Activated CD8-positive, alpha-beta memory T cell treated with anti-CD3 and anti-CD28 coated beads, Interleukin-2, amount 10 ng/mL, durations not matched to agents 7 days and 5 days (primary cell): ENCODE measurements at regions of chr16 and their contacts with region 1.

Region 1: DNA sequence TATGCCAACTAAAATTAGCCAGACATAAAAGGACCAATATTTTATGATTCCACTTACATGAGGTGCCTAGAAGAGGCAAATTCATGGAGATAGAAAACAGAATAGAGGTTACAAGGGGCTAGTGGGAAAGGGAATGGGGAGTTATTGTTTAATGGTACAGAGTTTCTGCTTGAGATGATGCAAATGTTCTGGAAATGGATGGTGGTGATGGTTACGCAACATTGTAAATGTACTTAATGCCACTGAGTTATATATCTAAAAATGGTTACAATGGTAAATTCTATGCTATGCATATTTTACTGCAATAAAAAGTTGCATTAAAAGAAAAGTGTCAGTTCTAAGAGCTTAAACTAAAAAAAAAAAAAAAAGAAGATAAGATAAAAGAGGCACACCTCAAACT is 17.9 kb downstream of the MT1X start:
- DNase-seq: no peak
- ATAC-seq: no peak
- H3K4me3 Mint-ChIP-seq: no peak overlapping the region
- H3K27ac Mint-ChIP-seq: no peak overlapping the region
- H3K4me1 Mint-ChIP-seq: peaks cover 11% of the 10 kb centered on the region
- H3K27me3 Mint-ChIP-seq: no peaks in the 10 kb centered on the region

Region 2: DNA sequence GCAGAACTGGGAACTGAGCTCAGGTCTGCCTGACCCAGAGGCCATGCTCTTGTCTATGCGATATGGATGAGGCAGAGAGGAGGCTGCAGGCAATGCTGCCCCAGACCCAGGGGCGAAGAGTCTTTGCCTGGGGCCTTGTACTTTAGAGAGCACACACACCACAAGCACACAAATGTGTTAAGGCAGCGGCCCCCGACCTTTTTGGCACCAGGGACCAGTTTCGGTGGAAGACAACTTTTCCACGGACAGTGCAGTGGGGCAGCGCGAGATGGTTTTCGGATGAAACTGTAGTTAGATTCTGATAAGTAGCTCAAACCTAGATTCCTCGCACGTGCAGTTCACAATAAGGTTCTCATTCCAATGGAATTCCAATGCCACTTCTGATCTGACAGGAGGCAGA is 128.7 kb before region 1 on chr16:
- CTCF ChIA-PET with region 1: interaction called, 94 read pairs
- DNase-seq: no peak
- ATAC-seq: no peak
- H3K4me3 Mint-ChIP-seq: no peak overlapping the region
- H3K27ac Mint-ChIP-seq: no peak overlapping the region
- H3K4me1 Mint-ChIP-seq: peaks cover 7% of the 10 kb centered on the region
- H3K27me3 Mint-ChIP-seq: peaks cover 7% of the 10 kb centered on the region

Region 3: DNA sequence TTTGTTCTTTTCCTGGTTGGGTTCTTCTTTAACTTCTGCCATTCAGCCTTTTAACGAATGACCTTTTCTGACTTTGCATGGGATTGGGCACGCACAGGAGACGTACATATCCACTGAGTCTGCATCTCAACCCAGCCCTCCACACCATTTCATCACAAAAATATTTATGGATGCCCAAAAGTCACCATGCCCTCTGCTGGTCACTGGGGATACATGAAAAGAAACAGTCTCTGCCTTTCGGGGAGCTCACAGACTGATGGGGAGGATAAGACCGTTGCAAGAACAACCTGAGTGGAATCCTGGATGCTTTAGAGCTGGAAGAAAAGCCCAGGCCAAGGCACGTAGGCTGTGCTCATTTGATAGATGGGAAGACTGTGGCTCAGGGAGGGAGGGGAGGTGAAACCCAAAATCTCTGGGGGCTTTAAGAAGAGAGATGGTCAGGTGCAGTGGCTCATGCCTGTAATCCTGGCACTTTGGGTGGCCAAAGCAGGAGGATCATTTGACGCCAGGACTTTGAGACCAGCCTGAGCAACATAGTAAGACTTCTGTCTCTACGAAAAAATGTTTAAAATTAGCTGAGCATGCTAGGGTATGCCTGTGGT is 99.7 kb before region 1 on chr16:
- CTCF ChIA-PET with region 1: interaction called, 21 read pairs
- DNase-seq: peak; percentile 62
- ATAC-seq: peak; percentile 61
- H3K4me3 Mint-ChIP-seq: no peak overlapping the region
- H3K27ac Mint-ChIP-seq: no peak overlapping the region
- H3K4me1 Mint-ChIP-seq: peaks cover 9% of the 10 kb centered on the region
- H3K27me3 Mint-ChIP-seq: peaks cover 42% of the 10 kb centered on the region

Region 4: DNA sequence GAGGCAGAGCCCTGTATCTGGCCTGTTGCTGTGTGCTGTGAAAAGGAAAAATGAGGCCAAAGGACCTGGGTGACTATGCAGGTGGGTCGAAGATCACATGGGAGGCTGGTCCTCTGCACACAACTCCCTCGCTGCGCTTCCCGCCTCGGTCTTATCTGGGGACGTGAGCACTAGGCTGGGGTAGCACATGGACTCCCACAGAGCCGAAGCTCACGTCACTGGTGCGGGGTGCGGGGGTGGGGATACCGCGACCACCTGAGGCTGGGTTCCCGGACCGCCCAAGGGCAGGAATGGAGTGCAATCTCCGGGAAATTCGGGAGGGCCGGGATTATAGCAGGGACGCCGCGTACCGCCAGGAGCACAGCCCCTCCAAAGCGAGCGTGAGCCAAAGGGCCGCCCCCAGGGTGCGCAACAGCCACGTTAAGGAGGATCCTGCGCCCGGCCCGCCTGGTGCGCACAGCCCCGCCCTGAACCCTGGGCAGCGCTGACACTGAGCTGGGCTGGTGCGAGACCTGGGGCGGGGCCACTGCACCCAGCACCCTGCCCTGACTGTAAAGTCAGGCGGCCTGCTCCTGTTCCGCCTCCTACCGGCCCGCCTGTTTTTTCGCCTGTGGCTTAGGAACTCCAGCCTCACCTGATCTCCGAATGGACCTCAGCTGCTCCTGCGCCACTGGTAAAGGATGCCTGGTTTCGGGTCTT is 57.0 kb before region 1 on chr16:
- CTCF ChIA-PET with region 1: interaction called, 38 read pairs
- DNase-seq: peak; percentile 91
- ATAC-seq: peak; percentile 100
- H3K4me3 Mint-ChIP-seq: peak overlapping the region; percentile 60
- H3K27ac Mint-ChIP-seq: peak overlapping the region; percentile 47
- H3K4me1 Mint-ChIP-seq: peaks cover 23% of the 10 kb centered on the region
- H3K27me3 Mint-ChIP-seq: peaks cover 64% of the 10 kb centered on the region

Region 5: DNA sequence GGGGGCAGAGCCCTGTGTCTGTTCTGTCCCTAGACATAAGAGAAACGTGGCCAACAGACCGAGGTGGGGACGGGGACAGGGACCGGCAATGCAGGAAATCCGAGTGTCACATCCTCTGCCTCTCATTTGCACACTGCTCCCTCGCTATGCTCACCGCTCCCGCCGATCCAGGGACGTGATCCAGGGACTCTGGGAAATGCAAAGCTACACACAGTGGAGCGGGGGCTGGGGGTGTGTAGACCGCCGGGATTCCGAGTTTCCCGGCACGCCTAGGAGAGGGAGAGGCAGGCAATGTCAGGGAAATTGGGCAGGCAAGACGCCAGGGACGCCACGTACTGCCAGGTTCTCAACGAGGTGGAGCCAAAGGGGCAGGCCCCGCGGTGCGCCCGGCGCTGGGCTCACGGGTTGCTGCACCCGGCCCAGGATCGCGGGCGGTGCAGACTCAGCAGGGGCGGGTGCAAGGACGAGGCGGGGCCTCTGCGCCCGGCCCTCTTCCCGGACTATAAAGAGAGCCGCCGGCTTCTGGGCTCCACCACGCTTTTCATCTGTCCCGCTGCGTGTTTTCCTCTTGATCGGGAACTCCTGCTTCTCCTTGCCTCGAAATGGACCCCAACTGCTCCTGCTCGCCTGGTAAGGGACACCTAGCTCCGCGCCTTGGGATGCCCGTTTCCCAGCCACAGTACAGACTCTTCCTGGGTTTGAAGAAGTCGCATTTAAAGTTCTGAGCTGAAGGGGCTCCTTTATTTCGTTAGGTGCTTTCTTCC is 18.1 kb before region 1 on chr16 and contains the start of gene MT1X:
- CTCF ChIA-PET with region 1: interaction called, 30 read pairs
- DNase-seq: peak; percentile 94
- ATAC-seq: peak; percentile 98
- H3K4me3 Mint-ChIP-seq: peak within 1 kb of the TSS; percentile 89
- H3K27ac Mint-ChIP-seq: peak within 1 kb of the TSS; percentile 92
- H3K4me1 Mint-ChIP-seq: peaks cover 25% of the 10 kb centered on the region
- H3K27me3 Mint-ChIP-seq: no peaks in the 10 kb centered on the region
- total RNA-seq, gene MT1X: 34.2 to 39.5 TPM